Sigmoid colon (tissue), 7 donors: ENCODE measurements at regions of chr12 and their contacts with region 1.

Region 1: GRCh38 chr12:6937481-6938297 is 5.9 kb upstream of the RNU7-1 start:
- DNase-seq: peak; percentile 97
- H3K4me3 ChIP-seq: peak overlapping the region; percentile 50 to 61 (median 56)
- H3K27ac ChIP-seq: peak overlapping the region; percentile 89 to 99 (median 94)
- H3K4me1 ChIP-seq: peaks cover 0 to 71% (median 61%) of the 10 kb centered on the region in 4 donors
- H3K27me3 ChIP-seq: no peaks in the 10 kb centered on the region
- CTCF ChIP-seq: peak; percentile 90 to 98 (median 94)
- EP300 ChIP-seq: peak in 1 of 4 donors; percentile 81
- POLR2A ChIP-seq: peak; percentile 15 to 60

Region 2: DNA sequence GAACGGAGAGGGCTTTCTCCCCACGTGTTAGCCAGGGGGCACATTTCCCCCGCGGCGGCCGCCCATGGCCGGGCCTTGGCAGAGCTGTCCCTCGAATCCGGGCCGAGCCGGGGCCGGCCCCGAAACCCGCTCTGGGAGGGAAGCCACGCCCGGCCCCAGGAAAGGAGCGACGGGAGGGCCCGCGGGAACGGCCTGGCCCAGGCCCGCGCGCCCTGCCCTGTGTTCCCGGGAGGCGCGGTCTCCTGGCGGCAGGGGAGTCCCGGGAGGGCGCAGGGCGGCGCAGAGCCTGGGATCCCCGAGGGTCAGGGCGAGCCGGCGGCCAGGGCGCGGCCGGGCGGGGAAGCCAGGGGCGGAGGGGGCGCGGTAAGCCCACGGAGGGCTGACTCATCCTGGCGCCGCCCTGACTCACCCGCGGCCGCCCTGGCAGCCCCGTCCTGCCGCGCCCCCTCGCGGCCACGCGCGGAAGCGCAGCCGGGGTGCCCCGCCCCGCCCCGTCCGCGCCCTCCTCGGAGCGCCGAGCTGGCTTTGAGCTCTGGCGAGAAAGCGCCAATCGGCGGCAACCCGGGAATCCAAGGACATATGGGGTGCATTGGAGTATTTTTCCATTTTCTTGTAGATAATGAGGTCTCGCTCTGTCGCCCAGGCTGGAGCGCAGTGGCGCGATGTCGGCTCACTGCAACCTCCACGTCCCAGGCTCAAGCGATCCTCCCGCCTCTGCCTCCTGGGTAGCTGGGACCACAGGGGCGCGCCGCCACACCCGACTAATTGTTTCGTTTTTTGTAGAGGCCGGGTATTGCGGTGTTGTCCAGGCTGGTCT is 659.0 kb before region 1 on chr12:
- intact Hi-C with region 1: no loop called
- DNase-seq: peak; percentile 92
- H3K4me3 ChIP-seq: peak overlapping the region; percentile 28 to 62 (median 58)
- H3K27ac ChIP-seq: peak overlapping the region; percentile 84 to 93 (median 91)
- H3K4me1 ChIP-seq: peaks cover 0 to 35% (median 29%) of the 10 kb centered on the region in 4 donors
- H3K27me3 ChIP-seq: no peaks in the 10 kb centered on the region
- CTCF ChIP-seq: peak in 2 of 4 experiments; percentile 47 to 97
- EP300 ChIP-seq: no peak
- POLR2A ChIP-seq: peak in 1 of 2 donors; percentile 27

Region 3: GRCh38 chr12:6927379-6928024 is 10.2 kb before region 1 on chr12 and contains the start of gene ATN1:
- intact Hi-C with region 1: loop called (anchors 1 kb)
- DNase-seq: peak; percentile 97
- H3K4me3 ChIP-seq: peak within 1 kb of the TSS; percentile 84 to 99 (median 98)
- H3K27ac ChIP-seq: peak within 1 kb of the TSS; percentile 97 to 100 (median 99)
- H3K4me1 ChIP-seq: peaks cover 4 to 76% (median 67%) of the 10 kb centered on the region in 4 donors
- H3K27me3 ChIP-seq: no peaks in the 10 kb centered on the region
- CTCF ChIP-seq: no peak
- EP300 ChIP-seq: no peak
- POLR2A ChIP-seq: peak in 1 of 2 donors; percentile 39
- total RNA-seq, gene ATN1: 46.4 to 138 (median 60.3) TPM

Region 4: GRCh38 chr12:6961711-6962284 is 24.1 kb after region 1 on chr12:
- intact Hi-C with region 1: no loop called
- DNase-seq: peak; percentile 89
- H3K4me3 ChIP-seq: peak overlapping the region in 3 of 4 donors; percentile 7 to 34 (median 11)
- H3K27ac ChIP-seq: peak overlapping the region; percentile 64 to 86 (median 82)
- H3K4me1 ChIP-seq: peaks cover 0 to 48% (median 31%) of the 10 kb centered on the region in 4 donors
- H3K27me3 ChIP-seq: no peaks in the 10 kb centered on the region
- CTCF ChIP-seq: peak; percentile 20 to 47 (median 42)
- EP300 ChIP-seq: no peak
- POLR2A ChIP-seq: no peak